ENCODE measurements at regions of chr10 and their contacts with region 1.

Region 1: DNA sequence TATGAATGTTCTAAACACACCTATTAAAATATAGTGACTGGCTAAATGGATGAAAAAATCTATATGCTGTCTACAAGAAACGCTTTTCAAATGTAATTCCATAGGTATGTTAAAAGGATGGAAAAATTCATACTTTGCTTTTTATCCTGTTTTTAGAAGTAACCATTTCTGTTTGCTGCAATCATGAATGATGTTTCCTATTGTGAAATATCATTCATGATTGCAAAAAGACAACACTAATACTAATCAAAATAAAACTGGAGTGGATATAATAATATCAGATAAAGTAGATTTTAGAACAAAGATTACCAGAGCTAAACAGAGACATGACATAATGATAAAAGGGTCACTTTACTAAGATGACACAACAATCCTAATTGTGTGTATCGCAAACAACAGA is 138.2 kb downstream of the FANK1 start:
- DNase-seq: no peak
- ATAC-seq: no peak
- H3K4me3 ChIP-seq: no peak overlapping the region
- H3K27ac ChIP-seq: no peak overlapping the region
- H3K4me1 ChIP-seq: no peaks in the 10 kb centered on the region
- H3K27me3 ChIP-seq: no peaks in the 10 kb centered on the region
- CTCF ChIP-seq: no peak

Region 2: DNA sequence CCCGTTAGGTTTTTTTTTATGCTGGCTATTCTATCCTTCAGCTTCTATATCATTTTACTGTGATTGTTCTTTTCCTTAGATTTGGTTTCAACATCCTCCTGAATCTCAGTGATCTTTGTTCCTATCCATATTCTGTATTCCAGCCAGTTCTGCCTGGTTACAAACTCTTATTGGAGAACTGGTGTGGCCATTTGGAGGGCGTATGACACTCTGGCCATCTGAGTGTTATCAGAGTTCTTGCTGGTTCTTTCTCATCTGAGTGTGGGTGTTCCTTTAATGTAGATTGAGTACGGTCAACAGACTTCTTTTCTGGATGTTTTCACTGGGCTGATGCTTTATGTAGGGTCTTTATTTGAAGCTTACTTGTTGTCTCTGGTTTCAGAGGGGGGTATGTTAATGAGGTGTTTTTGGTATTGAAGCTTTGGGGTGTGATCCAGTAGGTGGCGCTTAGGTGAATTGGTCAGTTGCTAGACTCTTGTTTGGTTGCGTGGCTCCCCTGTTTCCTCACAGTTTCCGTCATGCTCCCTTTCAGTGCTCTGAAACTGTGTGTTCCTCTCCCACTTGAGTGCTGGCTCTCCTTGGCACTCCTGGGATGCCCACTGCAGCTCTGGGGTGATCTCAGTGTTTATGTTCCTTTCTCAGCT is 57.5 kb before region 1 on chr10:
- intact Hi-C with region 1: no loop called
- DNase-seq: no peak
- ATAC-seq: no peak
- H3K4me3 ChIP-seq: no peak overlapping the region
- H3K27ac ChIP-seq: no peak overlapping the region
- H3K4me1 ChIP-seq: peaks cover 0 to under 1% (median 0%) of the 10 kb centered on the region in 9 donors
- H3K27me3 ChIP-seq: peaks cover 0 to 7% (median 0%) of the 10 kb centered on the region in 7 donors
- CTCF ChIP-seq: no peak

Region 3: DNA sequence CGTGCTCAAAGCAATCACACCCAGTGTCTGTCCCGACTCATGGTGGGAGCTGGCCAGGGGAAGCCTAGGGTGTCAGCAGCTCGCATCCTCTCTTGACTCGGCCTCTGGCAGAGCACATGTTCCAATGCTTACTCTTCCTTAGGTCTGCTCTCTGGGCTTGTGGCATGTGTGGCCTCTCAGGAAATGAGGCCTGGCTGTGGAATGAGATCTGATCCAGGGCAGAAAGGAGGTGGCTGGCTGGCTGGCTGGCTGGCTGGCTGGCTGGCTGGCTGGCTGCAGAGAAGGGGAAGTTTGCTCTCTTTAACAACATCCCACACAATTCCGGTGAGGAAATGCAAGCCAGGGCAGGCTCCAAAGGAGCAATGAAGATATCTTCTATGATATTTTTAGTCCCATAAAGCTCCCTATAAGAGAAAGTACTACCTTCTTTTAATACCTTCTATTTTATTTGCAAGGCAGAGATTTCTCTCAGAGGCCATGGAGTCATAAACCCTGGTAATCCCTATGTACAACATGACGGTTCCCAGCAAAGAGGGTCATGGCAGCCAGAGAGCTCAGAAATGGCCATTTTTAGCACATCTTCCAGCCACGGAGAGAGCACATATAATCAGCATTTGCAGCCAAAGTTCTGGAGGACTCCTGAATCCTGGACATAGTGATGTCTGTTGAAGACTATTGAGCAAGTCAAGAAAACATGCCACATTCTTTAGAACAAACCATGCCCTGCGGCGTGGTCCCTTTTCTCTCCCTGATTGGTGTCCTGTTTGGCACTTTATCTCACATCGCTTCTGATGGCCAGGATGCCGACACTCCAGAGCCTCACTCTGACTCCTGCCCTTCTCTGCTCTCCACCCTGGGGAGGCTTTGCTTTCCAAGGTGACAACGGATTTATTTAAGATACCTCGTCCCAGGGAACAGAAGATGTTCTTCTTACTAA is 15.4 kb after region 1 on chr10:
- intact Hi-C with region 1: loop called in 1 of 10 experiments (anchors 1 kb)
- DNase-seq: peak; percentile 37 to 47
- ATAC-seq: peak; percentile 68 to 94 (median 88)
- H3K4me3 ChIP-seq: no peak overlapping the region
- H3K27ac ChIP-seq: peak overlapping the region in 5 of 10 donors; percentile 14 to 71 (median 44)
- H3K4me1 ChIP-seq: peaks cover 0 to 33% (median 18%) of the 10 kb centered on the region in 9 donors
- H3K27me3 ChIP-seq: peaks cover 0 to 3% (median 0%) of the 10 kb centered on the region in 7 donors
- CTCF ChIP-seq: no peak

Measured in heart right ventricle (tissue), 16 donors.